Caco-2 (cell line): ENCODE measurements at regions of chr6 and their contacts with region 1.

Region 1: DNA sequence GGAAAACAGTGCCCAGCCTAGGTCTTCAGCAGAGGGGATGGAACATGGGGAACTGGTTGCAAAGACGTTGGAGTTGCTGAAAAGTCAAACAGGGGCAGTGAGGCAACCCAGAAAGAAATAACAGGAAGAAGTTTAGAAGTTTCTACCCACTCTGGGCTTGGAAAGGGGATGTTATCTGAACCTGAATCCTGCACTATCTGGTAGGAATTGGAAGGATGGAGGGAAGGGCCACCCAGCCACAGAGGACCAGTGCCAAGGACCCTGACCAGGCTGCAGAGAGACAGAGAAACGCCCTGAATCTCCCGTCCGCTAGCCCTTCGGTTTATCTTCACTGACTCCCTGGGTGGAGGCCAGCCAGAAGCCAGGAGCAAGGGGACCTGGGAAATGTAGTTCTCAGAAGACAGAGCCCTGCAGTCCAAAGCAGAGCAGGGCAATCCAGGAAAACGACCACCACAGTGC is 217.3 kb upstream of the RREB1 start:
- DNase-seq: peak; percentile 50 to 58
- H3K4me3 ChIP-seq: no peak overlapping the region
- H3K4me3 Mint-ChIP-seq: peak overlapping the region; percentile 50
- H3K27ac Mint-ChIP-seq: peak overlapping the region; percentile 58
- H3K4me1 ChIP-seq: peaks cover 42% of the 10 kb centered on the region
- H3K4me1 Mint-ChIP-seq: peaks cover 24% of the 10 kb centered on the region
- H3K27me3 ChIP-seq: no peaks in the 10 kb centered on the region
- H3K27me3 Mint-ChIP-seq: no peaks in the 10 kb centered on the region
- CTCF ChIP-seq: no peak

Region 2: GRCh38 chr6:6599468-6599873 is 291.0 kb before region 1 on chr6:
- CTCF ChIA-PET with region 1: no interaction called
- POLR2A ChIA-PET with region 1: no interaction called
- intact Hi-C with region 1: no loop called
- DNase-seq: peak in 1 of 2 experiments; percentile 11
- H3K4me3 ChIP-seq: no peak overlapping the region
- H3K4me3 Mint-ChIP-seq: no peak overlapping the region
- H3K27ac Mint-ChIP-seq: no peak overlapping the region
- H3K4me1 ChIP-seq: no peaks in the 10 kb centered on the region
- H3K4me1 Mint-ChIP-seq: no peaks in the 10 kb centered on the region
- H3K27me3 ChIP-seq: no peaks in the 10 kb centered on the region
- H3K27me3 Mint-ChIP-seq: peaks cover 16% of the 10 kb centered on the region
- CTCF ChIP-seq: no peak

Region 3: GRCh38 chr6:6676910-6677441 is 213.5 kb before region 1 on chr6:
- CTCF ChIA-PET with region 1: no interaction called
- POLR2A ChIA-PET with region 1: no interaction called
- intact Hi-C with region 1: loop called (anchors 10 kb)
- DNase-seq: peak; percentile 65 to 83
- H3K4me3 ChIP-seq: no peak overlapping the region
- H3K4me3 Mint-ChIP-seq: no peak overlapping the region
- H3K27ac Mint-ChIP-seq: no peak overlapping the region
- H3K4me1 ChIP-seq: peaks cover 3% of the 10 kb centered on the region
- H3K4me1 Mint-ChIP-seq: peaks cover 7% of the 10 kb centered on the region
- H3K27me3 ChIP-seq: no peaks in the 10 kb centered on the region
- H3K27me3 Mint-ChIP-seq: peaks cover 4% of the 10 kb centered on the region
- CTCF ChIP-seq: peak; percentile 86 to 92

Region 4: GRCh38 chr6:6811151-6812002 is 79.1 kb before region 1 on chr6:
- CTCF ChIA-PET with region 1: no interaction called
- POLR2A ChIA-PET with region 1: no interaction called
- intact Hi-C with region 1: loop called (anchors 10 kb)
- DNase-seq: peak; percentile 58 to 71
- H3K4me3 ChIP-seq: peak overlapping the region; percentile 21
- H3K4me3 Mint-ChIP-seq: peak overlapping the region; percentile 68
- H3K27ac Mint-ChIP-seq: peak overlapping the region; percentile 82
- H3K4me1 ChIP-seq: peaks cover 14% of the 10 kb centered on the region
- H3K4me1 Mint-ChIP-seq: peaks cover 22% of the 10 kb centered on the region
- H3K27me3 ChIP-seq: no peaks in the 10 kb centered on the region
- H3K27me3 Mint-ChIP-seq: no peaks in the 10 kb centered on the region
- CTCF ChIP-seq: no peak

Region 5: GRCh38 chr6:6969761-6970223 is 79.4 kb after region 1 on chr6:
- CTCF ChIA-PET with region 1: no interaction called
- POLR2A ChIA-PET with region 1: no interaction called
- intact Hi-C with region 1: loop called (anchors 2 kb)
- DNase-seq: peak; percentile 96 to 98
- H3K4me3 ChIP-seq: no peak overlapping the region
- H3K4me3 Mint-ChIP-seq: peak overlapping the region; percentile 52
- H3K27ac Mint-ChIP-seq: peak overlapping the region; percentile 98
- H3K4me1 ChIP-seq: peaks cover 54% of the 10 kb centered on the region
- H3K4me1 Mint-ChIP-seq: peaks cover 50% of the 10 kb centered on the region
- H3K27me3 ChIP-seq: no peaks in the 10 kb centered on the region
- H3K27me3 Mint-ChIP-seq: no peaks in the 10 kb centered on the region
- CTCF ChIP-seq: peak in 1 of 2 experiments; percentile 24